Activated CD8-positive, alpha-beta T cell treated with anti-CD3 and anti-CD28 coated beads for 36 hours (primary cell): ENCODE measurements at regions of chr12 and their contacts with region 1.

Region 1: DNA sequence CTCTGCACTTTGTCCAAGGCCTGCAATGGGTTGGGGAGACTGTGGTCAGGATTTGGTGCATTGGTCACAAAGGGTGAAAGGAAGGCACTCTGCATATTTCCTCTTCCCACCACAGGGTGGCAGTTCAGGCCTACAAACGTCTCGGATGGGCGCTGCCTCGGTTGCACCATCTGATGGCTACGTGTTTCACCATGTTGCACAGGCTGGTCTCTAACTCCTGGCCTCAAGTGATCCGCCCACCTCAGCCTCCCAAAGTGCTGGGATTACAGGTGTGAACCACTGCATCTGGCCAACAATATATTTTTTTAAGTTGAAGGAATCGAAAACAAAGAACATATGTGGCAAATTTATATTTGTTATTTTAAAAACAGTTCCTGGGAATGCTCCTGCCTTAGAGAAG is 35.1 kb downstream of the TMBIM6 start:
- DNase-seq: peak; percentile 82
- ATAC-seq: peak; percentile 97
- H3K4me3 Mint-ChIP-seq: no peak overlapping the region
- H3K27ac Mint-ChIP-seq: peak overlapping the region; percentile 33
- H3K4me1 Mint-ChIP-seq: peaks cover 13% of the 10 kb centered on the region
- H3K27me3 Mint-ChIP-seq: peaks cover 8% of the 10 kb centered on the region
- CTCF ChIP-seq: peak; percentile 79

Region 2: DNA sequence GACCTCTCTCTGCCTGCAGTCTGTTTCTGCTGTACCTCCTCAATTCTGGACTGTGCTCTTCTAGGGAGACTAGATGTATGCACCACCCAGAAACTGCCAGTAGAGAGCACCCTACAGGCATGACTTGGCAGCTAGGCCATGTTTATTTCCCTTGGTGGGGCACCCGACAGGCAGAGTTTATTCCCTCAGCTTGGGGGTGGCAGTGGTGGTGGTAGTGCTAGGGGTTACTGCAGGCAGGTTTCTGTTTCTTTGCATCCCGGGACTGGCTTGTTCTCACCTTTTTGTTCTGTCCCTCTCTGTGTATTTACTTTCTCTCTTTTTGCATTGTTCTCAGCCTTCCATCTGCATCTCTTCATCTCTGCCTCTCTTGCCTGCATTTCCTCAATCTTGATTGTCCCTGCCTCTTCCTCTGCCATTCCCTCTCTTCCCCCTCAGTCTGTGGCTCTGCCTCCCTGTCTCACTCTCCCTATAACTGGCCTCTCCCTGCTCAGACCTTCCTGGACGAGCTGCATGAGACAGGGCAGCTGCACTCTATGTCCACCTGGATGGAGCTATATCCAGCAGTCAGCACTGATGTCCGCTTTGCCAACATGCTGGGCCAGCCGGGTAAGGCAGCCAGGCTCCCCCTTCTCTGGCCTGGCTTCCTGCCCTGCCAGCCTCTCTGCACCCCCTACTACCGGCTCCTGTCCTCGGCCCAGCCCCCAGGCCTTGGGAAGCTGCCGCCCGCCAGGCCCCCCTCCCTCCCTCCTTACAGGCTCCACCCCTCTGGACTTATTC is 139.2 kb before region 1 on chr12:
- CTCF ChIA-PET with region 1: interaction called, 27 read pairs
- POLR2A ChIA-PET with region 1: no interaction called
- intact Hi-C with region 1: no loop called
- DNase-seq: peak; percentile 84
- ATAC-seq: peak; percentile 97
- H3K4me3 Mint-ChIP-seq: no peak overlapping the region
- H3K27ac Mint-ChIP-seq: peak overlapping the region; percentile 60
- H3K4me1 Mint-ChIP-seq: peaks cover 18% of the 10 kb centered on the region
- H3K27me3 Mint-ChIP-seq: no peaks in the 10 kb centered on the region
- CTCF ChIP-seq: peak; percentile 67

Region 3: DNA sequence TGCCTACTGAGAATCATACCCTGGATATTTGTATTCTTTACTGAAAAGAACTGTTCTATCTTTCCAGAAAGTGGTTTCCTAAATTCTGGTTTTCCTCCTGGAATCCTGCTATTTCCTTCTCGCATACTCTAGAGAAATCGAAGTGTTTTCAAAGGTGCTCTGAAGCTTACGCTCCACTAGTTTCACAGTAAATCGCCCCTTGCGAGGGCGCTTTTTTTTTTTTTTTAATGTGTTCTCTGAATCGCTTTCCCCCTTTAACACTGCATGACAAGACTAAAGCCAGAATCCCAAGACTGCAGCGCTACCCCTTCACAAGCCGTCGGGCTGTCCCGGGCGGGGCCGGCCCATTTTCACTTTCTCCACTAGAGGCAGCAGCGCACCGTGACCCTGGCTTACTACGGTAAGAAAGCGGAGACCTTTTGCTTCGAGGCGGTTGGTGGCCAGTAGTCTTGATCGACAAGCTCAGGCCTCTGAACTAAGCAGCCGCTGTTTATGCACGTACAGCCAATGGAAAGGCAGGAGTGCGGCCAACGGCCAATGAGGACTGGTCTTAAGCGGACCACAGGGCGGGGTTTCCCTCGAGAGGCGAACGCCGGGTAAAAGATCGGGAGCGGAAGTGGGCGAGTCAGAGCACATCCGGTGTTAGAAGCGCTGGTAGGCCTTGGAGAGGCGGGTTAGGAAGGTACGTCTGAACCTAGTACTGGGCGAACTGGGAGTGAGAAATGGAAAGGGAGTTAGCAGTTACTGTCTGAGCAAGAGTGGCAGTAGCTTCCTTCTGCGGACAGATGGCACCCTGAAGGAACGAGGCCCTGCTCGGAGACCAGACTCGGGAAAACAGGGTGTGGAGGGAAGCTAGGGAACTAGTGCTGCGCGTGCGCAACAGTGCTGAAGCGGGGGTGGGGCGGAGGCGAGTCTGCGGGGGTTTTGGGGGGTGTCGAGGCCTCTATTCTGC is 35.2 kb before region 1 on chr12 and contains the start of gene TMBIM6:
- CTCF ChIA-PET with region 1: interaction called, 47 read pairs
- POLR2A ChIA-PET with region 1: interaction called, 9 read pairs
- intact Hi-C with region 1: no loop called
- DNase-seq: peak; percentile 100
- ATAC-seq: peak; percentile 91
- H3K4me3 Mint-ChIP-seq: peak within 1 kb of the TSS; percentile 99
- H3K27ac Mint-ChIP-seq: peak within 1 kb of the TSS; percentile 95
- H3K4me1 Mint-ChIP-seq: peaks cover 31% of the 10 kb centered on the region
- H3K27me3 Mint-ChIP-seq: no peaks in the 10 kb centered on the region
- CTCF ChIP-seq: peak; percentile 95
- total RNA-seq, gene TMBIM6: 437 to 443 TPM

Region 4: DNA sequence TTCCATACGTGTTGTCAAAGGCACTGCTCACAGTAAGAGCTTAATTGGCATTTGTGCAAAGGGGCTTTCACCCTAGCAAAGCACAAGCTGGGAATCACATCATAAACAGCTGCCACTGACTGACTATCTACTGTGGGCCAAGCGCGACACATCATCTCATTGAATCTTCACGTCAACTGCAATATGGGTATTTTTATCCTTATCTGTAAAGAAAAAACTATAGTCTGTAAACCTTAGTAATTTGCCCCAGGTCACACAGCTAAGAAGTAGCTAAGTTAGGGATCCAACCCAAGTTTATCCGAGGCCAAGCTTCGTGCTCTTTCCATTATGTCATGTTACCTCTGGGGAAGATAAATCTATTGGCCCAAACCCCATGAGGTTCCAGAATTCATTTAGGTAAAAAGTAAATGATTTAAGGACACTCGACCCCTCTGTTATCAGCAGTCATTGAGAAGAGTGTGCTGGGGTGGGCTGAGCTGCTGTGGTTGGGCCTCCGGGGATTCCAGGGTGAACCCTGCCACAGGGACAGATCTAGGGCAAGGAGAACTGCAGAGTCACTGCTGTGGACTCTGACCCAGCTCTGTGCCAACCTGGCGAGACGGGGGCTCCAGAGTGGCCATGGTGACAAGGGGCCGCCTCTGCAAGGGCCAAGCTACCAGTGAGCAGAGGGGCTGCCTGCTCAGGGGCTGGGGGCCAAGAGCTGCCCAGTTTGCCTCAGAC is 24.2 kb after region 1 on chr12:
- CTCF ChIA-PET with region 1: interaction called, 13 read pairs
- POLR2A ChIA-PET with region 1: interaction called, 3 read pairs
- intact Hi-C with region 1: no loop called
- DNase-seq: no peak
- ATAC-seq: no peak
- H3K4me3 Mint-ChIP-seq: no peak overlapping the region
- H3K27ac Mint-ChIP-seq: no peak overlapping the region
- H3K4me1 Mint-ChIP-seq: no peaks in the 10 kb centered on the region
- H3K27me3 Mint-ChIP-seq: no peaks in the 10 kb centered on the region
- CTCF ChIP-seq: no peak

Region 5: DNA sequence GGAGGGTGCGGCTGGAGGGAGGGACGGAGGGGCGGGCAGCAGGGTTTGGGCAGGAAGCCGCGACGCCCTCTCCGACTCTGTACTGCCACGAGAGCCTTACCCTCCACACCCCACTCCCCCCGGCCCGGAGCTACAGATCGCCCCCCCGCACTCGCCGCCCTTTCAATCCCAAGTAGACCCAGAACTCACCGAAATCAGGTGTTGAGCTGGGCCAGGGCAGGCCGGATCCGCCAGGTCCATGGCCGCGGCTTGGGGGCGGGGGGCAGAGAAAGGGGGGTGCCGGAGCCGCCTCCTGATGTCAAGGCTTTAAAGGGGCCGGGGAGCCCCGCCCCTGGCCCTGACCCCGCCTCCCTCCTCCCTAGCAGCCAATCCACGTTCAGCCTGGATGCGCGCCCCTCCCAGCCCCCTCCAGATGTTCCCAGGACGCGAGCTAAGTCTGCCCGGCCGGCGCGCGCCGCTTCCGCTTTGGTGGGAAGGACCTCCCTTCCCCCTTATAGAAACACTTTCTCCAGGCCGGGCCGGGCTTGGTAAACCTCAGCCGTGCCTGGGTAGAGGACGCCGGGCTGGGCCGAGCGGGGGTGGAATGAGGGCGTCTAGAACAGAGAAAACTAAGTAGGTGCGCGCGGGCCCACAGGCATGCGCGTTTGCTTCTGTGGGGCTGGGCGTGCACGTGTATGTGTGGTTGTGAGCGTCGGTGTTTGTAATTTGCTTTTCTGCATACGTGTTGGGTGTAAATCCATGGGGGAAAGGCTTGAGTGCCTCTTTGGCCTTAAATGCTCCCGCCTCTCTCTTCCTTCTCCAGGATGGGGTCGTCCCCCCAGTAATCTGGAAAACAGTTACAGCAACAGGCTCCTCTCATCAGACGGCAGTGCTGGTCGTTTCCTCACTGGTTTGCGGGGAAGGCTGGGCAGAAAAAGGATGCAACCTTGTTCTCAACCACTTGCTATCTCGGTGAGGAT is 52.0 kb after region 1 on chr12 and contains the start of gene NCKAP5L:
- CTCF ChIA-PET with region 1: interaction called, 15 read pairs
- POLR2A ChIA-PET with region 1: interaction called, 3 read pairs
- intact Hi-C with region 1: no loop called
- DNase-seq: peak; percentile 97
- ATAC-seq: peak; percentile 99
- H3K4me3 Mint-ChIP-seq: peak within 1 kb of the TSS; percentile 90
- H3K27ac Mint-ChIP-seq: peak within 1 kb of the TSS; percentile 92
- H3K4me1 Mint-ChIP-seq: peaks cover 25% of the 10 kb centered on the region
- H3K27me3 Mint-ChIP-seq: no peaks in the 10 kb centered on the region
- CTCF ChIP-seq: no peak
- total RNA-seq, gene NCKAP5L: 5.5 to 5.7 TPM

Region 6: DNA sequence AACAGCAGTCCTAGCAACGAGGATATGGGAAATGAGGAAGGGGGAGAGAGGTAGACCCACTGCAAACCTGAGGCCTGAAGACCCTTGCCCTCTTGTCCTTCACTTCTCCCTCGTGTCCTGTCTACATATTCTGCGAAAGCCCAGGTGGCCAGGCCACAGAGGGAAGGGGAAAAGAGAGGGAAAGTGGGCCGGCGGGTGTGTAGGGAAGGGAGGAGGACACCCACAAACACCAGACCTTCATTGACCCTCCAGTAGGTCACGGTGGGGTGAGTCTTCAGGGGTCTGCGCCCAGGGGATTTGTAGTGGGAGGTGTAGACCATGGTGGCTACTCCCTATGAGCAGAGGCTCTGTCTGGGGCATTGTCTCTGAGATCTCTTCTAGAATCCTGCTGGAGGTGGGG is 123.5 kb after region 1 on chr12:
- CTCF ChIA-PET with region 1: no interaction called
- POLR2A ChIA-PET with region 1: no interaction called
- intact Hi-C with region 1: no loop called
- DNase-seq: no peak
- ATAC-seq: no peak
- H3K4me3 Mint-ChIP-seq: no peak overlapping the region
- H3K27ac Mint-ChIP-seq: no peak overlapping the region
- H3K4me1 Mint-ChIP-seq: peaks cover 10% of the 10 kb centered on the region
- H3K27me3 Mint-ChIP-seq: peaks cover 5% of the 10 kb centered on the region
- CTCF ChIP-seq: no peak

Region 7: GRCh38 chr12:49945394-49946080 is 169.1 kb after region 1 on chr12:
- CTCF ChIA-PET with region 1: interaction called, 14 read pairs
- POLR2A ChIA-PET with region 1: no interaction called
- intact Hi-C with region 1: no loop called
- DNase-seq: peak; percentile 93
- ATAC-seq: peak; percentile 99
- H3K4me3 Mint-ChIP-seq: peak overlapping the region; percentile 76
- H3K27ac Mint-ChIP-seq: peak overlapping the region; percentile 91
- H3K4me1 Mint-ChIP-seq: peaks cover 25% of the 10 kb centered on the region
- H3K27me3 Mint-ChIP-seq: no peaks in the 10 kb centered on the region
- CTCF ChIP-seq: peak; percentile 89

Region 8: DNA sequence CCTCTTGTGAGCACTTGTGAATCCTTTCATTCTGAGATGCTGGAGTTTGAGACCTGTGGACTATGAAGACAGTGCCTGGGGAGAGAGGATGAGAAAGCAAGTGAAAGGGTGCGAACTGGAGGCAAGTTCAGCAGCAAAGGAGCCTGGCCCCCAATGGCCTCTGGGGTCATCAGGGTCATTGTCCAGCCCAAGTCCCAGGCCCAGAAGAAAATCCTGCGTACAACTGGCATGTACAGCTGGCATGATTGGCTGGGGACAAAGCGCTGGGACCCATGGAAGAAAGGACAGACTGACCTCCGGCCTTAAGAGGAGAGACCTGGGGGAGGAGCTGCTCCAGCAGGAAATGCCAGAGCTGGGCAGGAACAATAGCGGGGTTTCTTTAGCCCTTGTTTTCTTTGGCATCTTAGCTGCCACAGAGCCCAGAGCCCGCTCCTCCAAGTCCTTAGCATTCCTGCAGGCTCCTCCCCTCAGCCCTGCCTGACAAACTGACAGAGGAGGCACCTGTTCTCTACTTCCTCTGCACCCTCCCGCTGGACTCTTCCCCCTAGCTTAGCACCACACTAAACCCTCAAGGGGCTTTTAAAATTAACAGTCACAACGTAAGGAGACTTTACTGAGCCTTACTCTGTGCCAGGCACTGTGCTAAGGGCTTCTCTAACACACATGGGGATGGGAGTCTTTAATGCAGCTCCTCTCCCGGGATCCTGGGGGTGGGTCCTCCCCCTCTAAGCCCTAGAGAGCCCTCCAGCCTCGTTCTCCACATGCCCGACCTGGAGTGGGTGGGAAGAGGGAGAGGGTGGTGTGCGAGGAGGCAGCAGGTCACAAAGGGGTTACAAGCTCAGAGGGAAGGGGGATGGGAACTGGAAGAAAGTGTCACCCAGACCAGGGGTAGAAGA is 183.4 kb after region 1 on chr12:
- CTCF ChIA-PET with region 1: no interaction called
- POLR2A ChIA-PET with region 1: no interaction called
- intact Hi-C with region 1: no loop called
- DNase-seq: no peak
- ATAC-seq: no peak
- H3K4me3 Mint-ChIP-seq: no peak overlapping the region
- H3K27ac Mint-ChIP-seq: no peak overlapping the region
- H3K4me1 Mint-ChIP-seq: peaks cover 6% of the 10 kb centered on the region
- H3K27me3 Mint-ChIP-seq: peaks cover 67% of the 10 kb centered on the region
- CTCF ChIP-seq: no peak

Region 9: DNA sequence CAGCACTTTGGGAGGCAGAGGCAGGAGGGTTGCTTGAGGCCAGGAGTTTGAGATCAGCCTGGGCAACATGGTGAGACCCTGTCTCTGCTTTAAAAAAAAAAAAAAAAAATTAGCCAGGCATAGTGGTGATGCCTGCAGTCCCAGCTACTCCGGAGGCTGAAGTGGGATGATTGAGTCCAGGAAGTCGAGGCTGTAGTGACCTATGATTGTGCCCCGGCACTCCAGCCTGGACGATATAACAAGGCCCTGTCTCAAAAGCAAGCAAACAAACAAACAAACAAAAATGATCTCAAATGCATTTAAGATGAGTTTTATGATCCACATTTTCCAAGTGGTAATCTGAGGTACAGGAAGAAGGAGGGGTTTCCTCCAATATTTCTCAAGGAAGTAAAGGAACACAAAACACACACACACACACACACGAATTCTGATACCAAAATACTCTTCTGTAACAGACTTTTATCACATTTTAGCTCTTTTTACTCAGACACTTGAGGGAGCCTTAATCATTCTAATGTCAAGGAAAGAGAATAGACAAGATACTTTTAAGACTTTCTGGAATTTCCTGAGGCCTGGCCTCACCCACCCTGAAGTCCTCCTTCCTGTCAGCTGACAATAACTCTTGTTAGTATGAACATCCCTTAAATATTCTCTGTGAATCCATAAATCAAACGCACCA is 435.1 kb after region 1 on chr12:
- CTCF ChIA-PET with region 1: no interaction called
- POLR2A ChIA-PET with region 1: no interaction called
- intact Hi-C with region 1: no loop called
- DNase-seq: no peak
- ATAC-seq: peak; percentile 42
- H3K4me3 Mint-ChIP-seq: peak overlapping the region; percentile 34
- H3K27ac Mint-ChIP-seq: peak overlapping the region; percentile 90
- H3K4me1 Mint-ChIP-seq: peaks cover 35% of the 10 kb centered on the region
- H3K27me3 Mint-ChIP-seq: no peaks in the 10 kb centered on the region
- CTCF ChIP-seq: no peak